H1 (cell line): ENCODE measurements at regions of chr18 and their contacts with region 1.

Region 1: DNA sequence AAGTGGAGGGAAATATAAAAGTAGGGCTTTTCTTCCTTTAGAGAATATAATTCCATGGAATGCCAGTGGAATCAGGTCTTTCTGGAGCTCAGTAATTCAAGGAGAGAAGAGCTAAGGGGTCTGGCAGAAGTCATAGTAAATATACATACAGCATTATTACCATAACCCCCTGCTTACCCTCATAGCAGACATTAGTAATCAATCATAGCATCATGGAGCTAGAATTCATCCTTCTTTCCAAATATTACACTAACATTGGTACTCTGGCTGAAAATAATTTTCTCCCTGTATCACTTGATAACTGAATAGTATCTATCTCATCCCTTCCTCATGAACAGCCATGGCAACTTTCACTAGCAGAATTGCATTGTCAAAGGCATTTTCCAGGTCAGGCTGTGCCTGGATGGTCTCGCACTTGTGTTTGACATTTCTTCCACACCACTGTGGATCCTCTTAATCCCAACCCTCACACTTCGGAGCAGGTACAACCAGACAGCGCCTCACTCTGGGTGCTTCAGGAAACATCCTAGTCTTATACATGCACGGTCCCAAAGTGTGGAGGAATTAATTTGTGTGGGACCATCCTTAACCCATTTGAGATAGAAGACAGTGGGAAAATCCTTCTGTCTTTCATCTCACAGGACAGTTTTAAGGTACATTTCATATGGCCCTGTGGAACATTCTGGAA is 84.2 kb upstream of the SEC11C start:
- DNase-seq: peak in 1 of 2 experiments; percentile 59
- H3K4me3 ChIP-seq: no peak overlapping the region
- H3K27ac ChIP-seq: no peak overlapping the region
- H3K4me1 ChIP-seq: peaks cover 0 to under 1% (median 0%) of the 10 kb centered on the region in 4 experiments; a peak in 2 of 7 replicates
- H3K27me3 ChIP-seq: no peaks in the 10 kb centered on the region
- CTCF ChIP-seq: peak; percentile 64 to 80 (median 67)
- EP300 ChIP-seq: no peak
- POLR2A ChIP-seq: no peak
- RAD21 ChIP-seq: peak; percentile 84 to 85

Region 2: GRCh38 chr18:59070181-59070912 is 14.9 kb after region 1 on chr18:
- CTCF ChIA-PET with region 1: interaction called, 32 read pairs
- POLR2A ChIA-PET with region 1: no interaction called
- DNase-seq: peak; percentile 56 to 98
- H3K4me3 ChIP-seq: no peak overlapping the region
- H3K27ac ChIP-seq: no peak overlapping the region
- H3K4me1 ChIP-seq: no peaks in the 10 kb centered on the region
- H3K27me3 ChIP-seq: no peaks in the 10 kb centered on the region
- CTCF ChIP-seq: peak; percentile 72 to 96 (median 95)
- EP300 ChIP-seq: peak in 1 of 2 experiments; percentile 99; a peak in 1 of 3 replicates
- POLR2A ChIP-seq: no peak
- RAD21 ChIP-seq: peak; percentile 88 to 94

Region 3: DNA sequence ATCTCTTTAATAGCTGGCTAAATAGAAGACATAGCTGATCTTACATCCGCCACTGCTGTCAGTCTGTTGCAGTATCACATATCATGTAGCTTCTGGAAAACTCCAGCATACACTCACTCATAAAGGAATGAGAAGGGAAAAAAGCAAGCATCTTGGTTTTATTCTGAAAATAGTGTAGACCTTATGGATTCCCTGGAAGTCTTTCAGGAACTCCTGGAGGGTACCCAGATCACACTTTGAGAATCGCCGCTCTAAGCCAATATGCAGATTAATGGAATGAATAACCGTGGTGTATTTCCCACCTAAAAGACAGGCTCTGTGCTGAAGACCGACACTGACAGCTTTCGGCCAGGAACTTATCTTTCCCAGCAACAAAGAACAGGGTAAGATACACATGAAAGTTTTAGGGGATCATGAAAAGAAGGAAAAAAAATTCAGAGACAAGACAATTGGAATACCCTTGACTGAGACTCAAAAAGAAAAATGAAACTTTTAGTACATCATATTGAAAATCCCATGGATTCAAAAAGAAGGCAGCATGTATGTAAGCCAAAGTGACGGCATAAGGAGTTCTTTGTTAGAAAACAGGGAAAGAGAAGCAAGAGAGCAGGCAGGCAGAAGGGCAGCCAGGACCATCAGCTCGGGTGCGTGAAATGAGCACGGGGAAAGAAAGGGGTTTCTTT is 27.8 kb after region 1 on chr18:
- CTCF ChIA-PET with region 1: no interaction called
- POLR2A ChIA-PET with region 1: no interaction called
- DNase-seq: no peak
- H3K4me3 ChIP-seq: no peak overlapping the region
- H3K27ac ChIP-seq: no peak overlapping the region
- H3K4me1 ChIP-seq: no peaks in the 10 kb centered on the region
- H3K27me3 ChIP-seq: peaks cover 0 to 4% (median 0%) of the 10 kb centered on the region in 4 experiments; a peak in 1 of 7 replicates
- CTCF ChIP-seq: no peak
- EP300 ChIP-seq: no peak
- POLR2A ChIP-seq: no peak
- RAD21 ChIP-seq: no peak